Mammary epithelial cell (primary cell): ENCODE measurements at regions of chrX and their contacts with region 1.

Region 1: GRCh38 chrX:95101851-95102250 is 1427.8 kb downstream of the FAM133A start:
- DNase-seq: no peak
- H3K4me3 ChIP-seq: no peak overlapping the region
- H3K27ac ChIP-seq: no peak overlapping the region
- H3K4me1 ChIP-seq: no peaks in the 10 kb centered on the region
- H3K27me3 ChIP-seq: peaks cover 3% of the 10 kb centered on the region
- CTCF ChIP-seq: no peak

Region 2: GRCh38 chrX:95040104-95040503 is 61.7 kb before region 1 on chrX:
- CTCF ChIA-PET with region 1: no interaction called
- dilution Hi-C with region 1: no loop called
- in situ Hi-C with region 1: no loop called
- intact Hi-C with region 1: loop called (anchors 10 kb)
- DNase-seq: no peak
- H3K4me3 ChIP-seq: no peak overlapping the region
- H3K27ac ChIP-seq: no peak overlapping the region
- H3K4me1 ChIP-seq: no peaks in the 10 kb centered on the region
- H3K27me3 ChIP-seq: no peaks in the 10 kb centered on the region
- CTCF ChIP-seq: no peak

Region 3: DNA sequence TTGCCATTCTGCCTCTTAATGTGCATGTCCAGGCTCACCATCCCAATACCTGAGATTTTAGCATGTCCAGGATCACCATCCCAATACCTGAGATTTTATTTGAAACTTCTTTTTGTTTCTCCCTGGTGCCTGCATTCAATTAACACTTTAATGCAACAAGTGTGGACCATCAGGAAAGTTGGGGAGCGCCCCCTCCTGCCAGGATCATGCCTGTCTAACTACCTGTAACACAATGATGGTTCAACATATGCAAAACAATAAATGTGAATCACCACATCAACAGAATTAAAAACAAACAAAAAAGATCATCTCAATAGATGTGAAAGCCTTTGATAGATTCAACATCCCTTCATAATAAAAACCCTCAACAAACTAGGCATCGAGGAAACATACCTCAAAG is 223.3 kb after region 1 on chrX:
- CTCF ChIA-PET with region 1: no interaction called
- dilution Hi-C with region 1: no loop called
- in situ Hi-C with region 1: no loop called
- intact Hi-C with region 1: loop called (anchors 10 kb)
- DNase-seq: no peak
- H3K4me3 ChIP-seq: no peak overlapping the region
- H3K27ac ChIP-seq: no peak overlapping the region
- H3K4me1 ChIP-seq: no peaks in the 10 kb centered on the region
- H3K27me3 ChIP-seq: no peaks in the 10 kb centered on the region
- CTCF ChIP-seq: peak in 1 of 2 donors; percentile 23